ENCODE measurements at regions of chr2 and their contacts with region 1.

Region 1: GRCh38 chr2:113117541-113118262 is 9.7 kb upstream of the IL1RN start:
- DNase-seq: peak; percentile 80
- ATAC-seq: peak; percentile 93
- H3K4me3 Mint-ChIP-seq: no peak overlapping the region
- H3K27ac Mint-ChIP-seq: peak overlapping the region; percentile 44
- H3K4me1 Mint-ChIP-seq: peaks cover 20% of the 10 kb centered on the region
- H3K27me3 Mint-ChIP-seq: peaks cover 5% of the 10 kb centered on the region
- CTCF ChIP-seq: no peak

Region 2: GRCh38 chr2:113105047-113105785 is 12.5 kb before region 1 on chr2:
- CTCF ChIA-PET with region 1: no interaction called
- POLR2A ChIA-PET with region 1: interaction called, 12 read pairs
- intact Hi-C with region 1: no loop called
- DNase-seq: peak; percentile 87
- ATAC-seq: peak; percentile 65
- H3K4me3 Mint-ChIP-seq: no peak overlapping the region
- H3K27ac Mint-ChIP-seq: peak overlapping the region; percentile 87
- H3K4me1 Mint-ChIP-seq: peaks cover 38% of the 10 kb centered on the region
- H3K27me3 Mint-ChIP-seq: no peaks in the 10 kb centered on the region
- CTCF ChIP-seq: no peak